ENCODE measurements at regions of chr13 and their contacts with region 1.

Region 1: GRCh38 chr13:99151516-99151915 is 49.1 kb upstream of the UBAC2 start:
- DNase-seq: peak; percentile 96
- H3K4me3 Mint-ChIP-seq: peak overlapping the region; percentile 11
- H3K27ac Mint-ChIP-seq: peak overlapping the region; percentile 91
- H3K4me1 Mint-ChIP-seq: peaks cover 31% of the 10 kb centered on the region
- H3K27me3 Mint-ChIP-seq: no peaks in the 10 kb centered on the region
- CTCF ChIP-seq: no peak

Region 2: GRCh38 chr13:98895849-98896633 is 255.5 kb before region 1 on chr13:
- CTCF ChIA-PET with region 1: no interaction called
- POLR2A ChIA-PET with region 1: no interaction called
- intact Hi-C with region 1: loop called (anchors 2 kb)
- DNase-seq: no peak
- H3K4me3 Mint-ChIP-seq: no peak overlapping the region
- H3K27ac Mint-ChIP-seq: no peak overlapping the region
- H3K4me1 Mint-ChIP-seq: peaks cover 1% of the 10 kb centered on the region
- H3K27me3 Mint-ChIP-seq: no peaks in the 10 kb centered on the region
- CTCF ChIP-seq: no peak

Region 3: DNA sequence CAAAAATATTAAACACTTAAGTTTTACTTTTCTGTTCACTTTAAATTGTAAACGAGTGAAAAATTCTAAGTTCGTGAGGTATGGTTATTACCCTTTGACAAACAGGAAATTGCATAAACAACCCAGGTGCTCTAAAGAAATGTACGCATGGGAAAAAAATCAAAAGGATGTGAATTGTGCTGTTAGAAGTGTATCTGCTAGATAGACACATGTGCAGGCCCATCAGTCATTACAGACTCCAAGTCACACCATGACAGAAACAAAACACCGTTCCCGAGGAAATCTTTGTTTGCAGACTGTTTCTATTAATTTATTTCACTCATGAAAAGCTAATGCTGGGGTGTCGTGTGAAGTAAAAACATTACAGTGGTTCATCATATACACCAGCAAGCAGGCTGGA is 156.6 kb before region 1 on chr13:
- CTCF ChIA-PET with region 1: no interaction called
- POLR2A ChIA-PET with region 1: no interaction called
- intact Hi-C with region 1: no loop called
- DNase-seq: no peak
- H3K4me3 Mint-ChIP-seq: no peak overlapping the region
- H3K27ac Mint-ChIP-seq: no peak overlapping the region
- H3K4me1 Mint-ChIP-seq: peaks cover 39% of the 10 kb centered on the region
- H3K27me3 Mint-ChIP-seq: no peaks in the 10 kb centered on the region
- CTCF ChIP-seq: no peak

Region 4: GRCh38 chr13:99004978-99005377 is 146.5 kb before region 1 on chr13:
- CTCF ChIA-PET with region 1: no interaction called
- POLR2A ChIA-PET with region 1: no interaction called
- intact Hi-C with region 1: no loop called
- DNase-seq: no peak
- H3K4me3 Mint-ChIP-seq: no peak overlapping the region
- H3K27ac Mint-ChIP-seq: no peak overlapping the region
- H3K4me1 Mint-ChIP-seq: peaks cover 31% of the 10 kb centered on the region
- H3K27me3 Mint-ChIP-seq: no peaks in the 10 kb centered on the region
- CTCF ChIP-seq: no peak

Region 5: DNA sequence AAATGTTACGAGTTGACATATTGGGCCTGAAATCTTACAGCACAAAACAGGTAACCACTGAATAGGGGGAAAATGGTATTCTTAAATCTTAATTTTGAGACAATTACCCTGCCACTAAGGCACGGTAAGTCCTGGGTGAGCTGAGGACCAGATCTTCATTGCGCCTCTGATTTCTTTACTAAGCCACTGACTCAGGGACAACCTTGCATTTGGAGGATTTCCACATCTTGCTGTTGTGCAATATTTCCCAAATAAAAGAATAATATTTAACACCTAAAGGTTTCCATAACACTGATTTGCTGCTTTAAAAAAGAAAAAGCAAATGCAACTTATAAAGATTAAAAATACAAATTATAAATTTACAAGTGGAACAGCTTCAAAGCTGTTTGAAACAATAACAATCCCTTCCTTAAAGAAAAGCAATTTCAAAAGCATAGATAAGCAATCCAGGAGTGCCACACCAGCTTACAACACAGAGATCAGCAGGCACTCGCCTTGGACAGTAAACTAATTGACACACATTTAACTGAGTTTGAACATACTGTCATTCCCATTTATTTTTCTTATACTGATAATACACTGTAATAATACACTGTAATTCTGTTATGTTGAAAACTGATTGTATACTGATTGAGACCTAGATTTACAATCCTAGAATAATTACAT is 94.1 kb before region 1 on chr13:
- CTCF ChIA-PET with region 1: no interaction called
- POLR2A ChIA-PET with region 1: interaction called, 5 read pairs
- intact Hi-C with region 1: loop called (anchors 5 kb)
- DNase-seq: peak; percentile 89
- H3K4me3 Mint-ChIP-seq: no peak overlapping the region
- H3K27ac Mint-ChIP-seq: peak overlapping the region; percentile 59
- H3K4me1 Mint-ChIP-seq: peaks cover 47% of the 10 kb centered on the region
- H3K27me3 Mint-ChIP-seq: no peaks in the 10 kb centered on the region
- CTCF ChIP-seq: no peak

Region 6: DNA sequence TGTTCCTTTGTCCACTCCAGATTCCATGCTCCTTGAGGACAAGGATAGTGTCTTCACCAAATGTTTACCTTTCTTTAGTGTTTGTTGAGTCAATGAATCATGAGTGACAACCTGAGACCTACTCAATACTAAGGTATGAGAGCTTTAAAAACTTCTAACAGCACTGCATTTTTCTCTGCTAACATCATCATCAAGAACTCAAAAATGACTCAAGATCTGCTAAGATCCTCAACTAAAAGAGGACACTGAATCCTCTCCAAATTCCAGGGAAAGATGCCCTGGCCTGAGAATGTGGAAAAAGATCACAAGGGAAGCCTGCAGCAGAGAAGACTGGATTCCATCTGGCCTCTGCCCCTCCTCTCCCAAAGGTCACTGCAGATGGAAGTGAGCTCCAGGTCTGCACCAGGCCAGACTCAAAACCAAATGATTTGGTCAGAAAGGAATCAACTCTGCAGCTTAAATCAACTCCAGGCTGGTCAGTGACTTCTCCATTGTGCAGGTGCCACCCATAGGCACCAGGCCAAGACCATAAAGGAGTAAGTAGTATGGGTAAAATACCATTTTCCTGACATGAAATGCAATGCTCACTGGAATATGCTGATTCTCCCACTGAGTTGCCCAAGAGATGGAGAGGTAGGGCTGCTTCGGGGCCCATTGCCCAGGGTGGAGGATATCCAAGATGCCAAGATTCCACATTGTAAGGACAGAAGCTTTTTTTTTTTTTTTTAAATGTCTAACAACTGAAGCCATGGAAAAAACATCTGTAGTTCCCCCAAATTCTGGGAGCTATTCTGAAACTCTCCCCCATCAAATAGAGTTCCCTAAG is 84.1 kb before region 1 on chr13:
- CTCF ChIA-PET with region 1: no interaction called
- POLR2A ChIA-PET with region 1: interaction called, 14 read pairs
- intact Hi-C with region 1: no loop called
- DNase-seq: peak; percentile 50
- H3K4me3 Mint-ChIP-seq: no peak overlapping the region
- H3K27ac Mint-ChIP-seq: peak overlapping the region; percentile 87
- H3K4me1 Mint-ChIP-seq: peaks cover 46% of the 10 kb centered on the region
- H3K27me3 Mint-ChIP-seq: no peaks in the 10 kb centered on the region
- CTCF ChIP-seq: no peak

Region 7: DNA sequence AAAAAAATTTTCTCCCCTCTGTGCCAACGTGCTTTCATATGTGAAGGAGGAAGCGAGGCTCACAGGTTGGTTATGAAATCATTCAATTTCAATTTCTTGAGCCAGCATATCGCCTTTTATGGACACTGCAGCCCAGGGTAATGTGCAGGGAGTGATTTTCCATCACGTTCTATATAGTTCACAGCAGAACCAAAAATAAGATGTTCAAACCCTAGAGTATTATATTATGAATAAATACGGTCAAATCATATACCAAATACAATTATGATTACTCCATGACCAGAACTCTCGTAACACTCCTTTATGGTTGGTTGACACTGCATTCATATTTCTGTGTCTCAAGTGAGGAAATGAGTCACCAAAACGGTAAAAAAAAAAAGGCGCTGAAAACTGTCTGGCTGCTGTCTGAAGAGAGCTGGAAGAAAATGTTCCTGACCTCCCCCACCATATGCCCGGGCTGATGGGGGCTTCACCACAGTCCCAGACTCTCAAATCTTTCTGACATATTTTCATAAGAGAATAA is 26.7 kb before region 1 on chr13:
- CTCF ChIA-PET with region 1: interaction called, 11 read pairs
- POLR2A ChIA-PET with region 1: interaction called, 21 read pairs
- intact Hi-C with region 1: loop called (anchors 2 kb)
- DNase-seq: peak; percentile 84
- H3K4me3 Mint-ChIP-seq: peak overlapping the region; percentile 67
- H3K27ac Mint-ChIP-seq: peak overlapping the region; percentile 44
- H3K4me1 Mint-ChIP-seq: peaks cover 34% of the 10 kb centered on the region
- H3K27me3 Mint-ChIP-seq: no peaks in the 10 kb centered on the region
- CTCF ChIP-seq: no peak

Region 8: DNA sequence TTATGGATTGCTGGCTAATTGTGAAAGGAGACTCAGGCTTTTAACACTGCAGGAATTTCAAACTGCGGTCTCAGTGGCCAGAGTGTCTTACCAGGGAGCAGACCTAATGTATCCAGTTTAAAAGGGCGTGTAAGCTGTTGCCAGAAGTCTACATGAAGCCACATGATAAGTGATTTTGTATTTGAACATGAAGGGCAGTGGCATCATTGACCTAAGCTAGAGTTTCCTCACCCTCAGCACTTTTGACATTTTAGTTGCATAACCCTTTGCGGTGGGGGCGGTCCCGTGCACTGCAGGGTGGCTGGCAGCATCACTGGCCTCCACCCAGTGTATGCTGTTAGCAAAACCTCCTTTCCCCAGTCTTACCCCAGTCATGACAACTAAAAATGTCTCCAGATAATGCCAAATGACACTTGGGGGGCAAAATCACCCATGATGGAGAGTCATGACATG is 130.3 kb after region 1 on chr13:
- CTCF ChIA-PET with region 1: no interaction called
- POLR2A ChIA-PET with region 1: no interaction called
- intact Hi-C with region 1: no loop called
- DNase-seq: peak; percentile 48
- H3K4me3 Mint-ChIP-seq: no peak overlapping the region
- H3K27ac Mint-ChIP-seq: no peak overlapping the region
- H3K4me1 Mint-ChIP-seq: peaks cover 14% of the 10 kb centered on the region
- H3K27me3 Mint-ChIP-seq: no peaks in the 10 kb centered on the region
- CTCF ChIP-seq: no peak